CD8-positive, alpha-beta T cell (primary cell): ENCODE measurements at regions of chr5 and their contacts with region 1.

Region 1: DNA sequence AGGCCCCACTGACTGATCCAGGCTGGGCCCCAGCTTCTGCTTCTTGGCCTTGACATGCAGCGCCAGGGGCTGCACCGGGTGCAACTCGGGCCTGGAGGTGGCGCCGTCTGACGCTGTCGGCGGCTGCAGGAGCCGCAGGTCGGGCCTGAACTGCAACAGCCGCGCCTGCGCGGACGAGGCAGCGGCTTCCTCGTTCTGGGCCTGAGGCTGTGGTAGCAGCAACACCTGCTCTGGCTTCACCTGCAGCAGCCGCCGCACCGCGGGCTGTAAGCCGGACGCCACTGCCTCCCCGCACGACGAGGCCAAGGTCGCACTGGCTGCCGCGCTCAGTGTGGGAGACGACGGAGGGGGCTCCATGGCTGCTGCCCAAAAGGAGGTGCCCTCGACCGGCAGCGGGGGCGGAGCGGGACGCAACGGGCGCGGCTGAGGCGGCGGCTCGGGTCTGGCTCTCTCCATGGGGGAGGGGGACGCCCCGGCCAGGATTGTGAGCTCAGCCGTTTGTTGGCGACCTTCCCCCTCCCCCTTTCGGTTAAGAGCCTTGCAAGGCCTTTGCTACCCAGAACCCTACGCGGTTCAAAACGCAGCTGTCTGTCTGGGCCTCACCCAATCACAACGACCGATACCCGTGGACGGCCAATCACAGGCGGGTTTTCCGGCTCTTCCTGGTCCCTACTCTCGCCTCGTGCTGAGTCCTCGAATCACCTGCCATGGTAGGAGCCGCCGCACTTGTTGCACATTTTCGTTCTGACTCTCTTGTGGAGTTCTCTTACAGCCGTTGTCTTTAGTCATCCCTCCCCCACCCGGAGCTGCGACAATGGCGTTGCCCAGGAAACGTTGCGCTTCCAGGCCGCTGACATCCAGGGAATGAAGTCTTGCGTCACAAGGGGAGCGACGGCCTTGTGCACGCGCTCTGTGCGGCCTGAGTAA is at the start of gene SOX30:
- DNase-seq: peak; percentile 65 to 89 (median 78)
- ATAC-seq: peak; percentile 98
- H3K4me3 ChIP-seq: peak within 1 kb of the TSS; percentile 42 to 63
- H3K4me3 Mint-ChIP-seq: peak within 1 kb of the TSS; percentile 77
- H3K27ac ChIP-seq: peak within 1 kb of the TSS; percentile 7 to 22
- H3K27ac Mint-ChIP-seq: peak within 1 kb of the TSS; percentile 81
- H3K4me1 ChIP-seq: no peaks in the 10 kb centered on the region
- H3K4me1 Mint-ChIP-seq: peaks cover 16% of the 10 kb centered on the region
- H3K27me3 ChIP-seq: no peaks in the 10 kb centered on the region
- H3K27me3 Mint-ChIP-seq: no peaks in the 10 kb centered on the region
- CTCF ChIP-seq: no peak
- total RNA-seq, gene SOX30: not detected

Region 2: DNA sequence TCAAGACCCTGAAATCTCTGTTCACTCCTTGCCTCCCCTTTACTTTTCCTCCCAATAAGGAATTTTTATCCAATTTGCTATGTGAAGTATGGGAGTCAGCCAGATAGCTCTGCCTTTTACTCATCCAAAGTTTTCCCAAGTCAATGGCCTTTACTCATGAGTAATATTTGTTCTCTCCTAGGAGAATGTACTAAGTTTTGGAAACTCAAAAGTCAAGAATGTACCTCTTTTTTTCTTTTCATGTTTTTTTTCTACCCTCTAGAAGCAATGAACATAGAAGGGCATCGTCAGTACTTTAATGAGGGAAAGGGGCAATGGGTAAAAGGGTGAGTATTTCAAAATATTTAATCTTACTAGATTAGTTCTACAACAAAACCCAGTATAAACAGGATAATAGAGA is 1465.1 kb before region 1 on chr5:
- CTCF ChIA-PET with region 1: no interaction called
- POLR2A ChIA-PET with region 1: no interaction called
- intact Hi-C with region 1: no loop called
- DNase-seq: no peak
- ATAC-seq: no peak
- H3K4me3 ChIP-seq: no peak overlapping the region
- H3K4me3 Mint-ChIP-seq: no peak overlapping the region
- H3K27ac ChIP-seq: no peak overlapping the region
- H3K27ac Mint-ChIP-seq: no peak overlapping the region
- H3K4me1 ChIP-seq: no peaks in the 10 kb centered on the region
- H3K4me1 Mint-ChIP-seq: no peaks in the 10 kb centered on the region
- H3K27me3 ChIP-seq: no peaks in the 10 kb centered on the region
- H3K27me3 Mint-ChIP-seq: no peaks in the 10 kb centered on the region
- CTCF ChIP-seq: no peak

Region 3: GRCh38 chr5:157603333-157604190 is 48.3 kb before region 1 on chr5:
- CTCF ChIA-PET with region 1: interaction called, 4 read pairs
- POLR2A ChIA-PET with region 1: no interaction called
- intact Hi-C with region 1: loop called in 1 of 2 experiments (anchors 10 kb)
- DNase-seq: peak; percentile 3 to 77 (median 54)
- ATAC-seq: peak; percentile 70
- H3K4me3 ChIP-seq: no peak overlapping the region
- H3K4me3 Mint-ChIP-seq: peak overlapping the region; percentile 6
- H3K27ac ChIP-seq: peak overlapping the region in 1 of 2 experiments; percentile 34
- H3K27ac Mint-ChIP-seq: peak overlapping the region; percentile 80
- H3K4me1 ChIP-seq: peaks cover 7% of the 10 kb centered on the region
- H3K4me1 Mint-ChIP-seq: peaks cover 38% of the 10 kb centered on the region
- H3K27me3 ChIP-seq: no peaks in the 10 kb centered on the region
- H3K27me3 Mint-ChIP-seq: no peaks in the 10 kb centered on the region
- CTCF ChIP-seq: no peak